ENCODE measurements at regions of chr12 and their contacts with region 1.

Region 1: DNA sequence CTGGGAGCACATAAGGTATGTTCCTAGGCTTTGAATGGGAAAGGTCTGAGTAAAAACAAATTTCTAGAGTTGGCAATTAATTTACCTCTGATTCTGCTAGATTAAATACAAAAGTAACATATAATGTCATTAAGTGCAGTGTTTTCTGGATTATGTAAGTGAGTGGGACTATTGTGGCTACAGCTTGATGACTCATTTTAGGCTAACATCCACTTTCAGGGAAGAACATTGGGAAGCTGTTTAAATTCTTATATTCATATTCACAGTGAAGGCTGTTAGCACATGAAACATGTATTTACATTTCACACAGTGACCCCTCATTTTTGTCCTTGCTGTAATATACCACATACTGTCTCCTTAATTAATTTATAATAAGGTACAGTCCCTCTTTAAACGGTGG is 13.2 kb upstream of the BMAL2 start:
- DNase-seq: no peak
- H3K4me3 ChIP-seq: no peak overlapping the region
- H3K27ac ChIP-seq: peak overlapping the region; percentile 27; the same call in 1 of the 2 replicates
- H3K4me1 ChIP-seq: 0 out of 2 replicates have a peak, but pooled peaks cover 7% of the 10 kb centered on the region
- H3K27me3 ChIP-seq: no peaks in the 10 kb centered on the region
- CTCF ChIP-seq: no peak

Region 2: GRCh38 chr12:26871985-26872384 is 447.4 kb before region 1 on chr12:
- CTCF ChIA-PET with region 1: no interaction called
- POLR2A ChIA-PET with region 1: interaction called, 12 read pairs
- intact Hi-C with region 1: no loop called
- DNase-seq: no peak
- H3K4me3 ChIP-seq: no peak overlapping the region
- H3K27ac ChIP-seq: no peak overlapping the region
- H3K4me1 ChIP-seq: peaks cover 14% of the 10 kb centered on the region
- H3K27me3 ChIP-seq: no peaks in the 10 kb centered on the region
- CTCF ChIP-seq: no peak

Region 3: GRCh38 chr12:27243804-27244683 is 75.4 kb before region 1 on chr12 and contains the start of gene STK38L:
- CTCF ChIA-PET with region 1: no interaction called
- POLR2A ChIA-PET with region 1: no interaction called
- intact Hi-C with region 1: no loop called
- DNase-seq: peak; percentile 93 to 100
- H3K4me3 ChIP-seq: peak within 1 kb of the TSS; percentile 64
- H3K27ac ChIP-seq: peak within 1 kb of the TSS; percentile 75
- H3K4me1 ChIP-seq: peaks cover 19% of the 10 kb centered on the region
- H3K27me3 ChIP-seq: no peaks in the 10 kb centered on the region
- CTCF ChIP-seq: peak; percentile 56
- total RNA-seq, gene STK38L: 34.7 and 40.0 TPM in 2 replicates

Measured in PC-9 (cell line).